ENCODE measurements at regions of chr7 and their contacts with region 1.

Region 1: DNA sequence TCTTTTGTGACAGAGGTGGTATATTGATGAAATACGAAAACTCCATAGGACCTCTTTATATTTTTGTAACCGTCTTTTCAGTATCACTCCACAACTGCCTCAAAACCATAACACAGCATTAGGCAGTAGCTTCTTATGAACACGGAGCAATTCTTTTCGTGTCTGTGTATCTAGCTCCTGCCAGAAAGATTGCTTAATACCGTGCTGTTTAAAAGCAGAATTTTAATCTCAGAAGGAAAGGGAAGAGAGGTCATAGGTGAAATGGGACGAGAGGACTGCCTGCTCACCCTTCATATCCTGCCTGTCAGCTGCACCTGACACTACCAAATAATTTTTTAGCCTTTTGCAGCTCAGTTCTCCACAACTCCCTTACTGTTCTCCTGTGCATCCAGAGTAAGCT is 200.7 kb downstream of the DNAH11 start:
- DNase-seq: no peak
- H3K4me3 ChIP-seq: no peak overlapping the region
- H3K27ac ChIP-seq: no peak overlapping the region
- H3K4me1 ChIP-seq: no peaks in the 10 kb centered on the region
- H3K27me3 ChIP-seq: no peaks in the 10 kb centered on the region
- CTCF ChIP-seq: no peak
- POLR2A ChIP-seq: no peak

Region 2: GRCh38 chr7:21587139-21587784 is 156.2 kb before region 1 on chr7:
- intact Hi-C with region 1: no loop called
- DNase-seq: no peak
- H3K4me3 ChIP-seq: no peak overlapping the region
- H3K27ac ChIP-seq: no peak overlapping the region
- H3K4me1 ChIP-seq: no peaks in the 10 kb centered on the region
- H3K27me3 ChIP-seq: no peaks in the 10 kb centered on the region
- CTCF ChIP-seq: no peak
- POLR2A ChIP-seq: no peak

Region 3: GRCh38 chr7:21611129-21611528 is 132.4 kb before region 1 on chr7:
- intact Hi-C with region 1: loop called (anchors 5 kb)
- DNase-seq: no peak
- H3K4me3 ChIP-seq: no peak overlapping the region
- H3K27ac ChIP-seq: no peak overlapping the region
- H3K4me1 ChIP-seq: no peaks in the 10 kb centered on the region
- H3K27me3 ChIP-seq: peaks cover 0 to 12% (median 0%) of the 10 kb centered on the region in 7 donors
- CTCF ChIP-seq: no peak
- POLR2A ChIP-seq: no peak